Left cardiac atrium (tissue), 4 donors: ENCODE measurements at regions of chr15 and their contacts with region 1.

Region 1: GRCh38 chr15:29815000-29815710 is 7.1 kb downstream of the TJP1 start:
- DNase-seq: no peak
- ATAC-seq: peak in 1 of 2 donors; percentile 80

Region 2: GRCh38 chr15:29765898-29766527 is 49.1 kb before region 1 on chr15:
- intact Hi-C with region 1: loop called in 1 of 2 experiments (anchors 5 kb)
- DNase-seq: peak; percentile 48
- ATAC-seq: peak; percentile 69 to 79

Region 3: GRCh38 chr15:29774900-29775299 is 40.3 kb before region 1 on chr15:
- intact Hi-C with region 1: loop called in 1 of 2 experiments (anchors 5 kb)
- DNase-seq: no peak
- ATAC-seq: peak in 1 of 2 donors; percentile 31

Region 4: GRCh38 chr15:29888646-29889045 is 73.5 kb after region 1 on chr15:
- intact Hi-C with region 1: no loop called
- DNase-seq: no peak
- ATAC-seq: peak; percentile 91 to 94